PC-9 (cell line): ENCODE measurements at regions of chr5 and their contacts with region 1.

Region 1: DNA sequence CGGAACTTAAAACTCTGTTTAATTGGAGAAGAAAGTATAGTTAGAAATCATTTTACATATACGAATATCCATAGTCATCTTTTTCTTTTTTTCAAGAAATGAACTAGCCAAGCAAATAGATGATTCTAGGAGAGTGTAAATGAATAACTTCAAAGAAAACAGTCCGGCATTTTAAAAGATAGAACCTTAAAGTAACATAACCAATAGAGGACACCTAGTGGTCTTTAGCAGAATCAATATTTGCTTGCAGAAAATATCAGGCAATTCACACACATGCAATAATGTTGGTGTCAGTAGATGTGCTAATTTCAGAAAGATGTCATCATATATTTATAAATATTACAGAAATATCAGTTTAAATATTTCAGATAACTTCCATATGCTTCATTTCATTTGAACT is 57.1 kb downstream of the HCN1 start:
- DNase-seq: no peak
- H3K4me3 ChIP-seq: no peak overlapping the region
- H3K27ac ChIP-seq: no peak overlapping the region
- H3K4me1 ChIP-seq: no peaks in the 10 kb centered on the region
- H3K27me3 ChIP-seq: no peaks in the 10 kb centered on the region
- CTCF ChIP-seq: peak; percentile 58

Region 2: GRCh38 chr5:45038366-45038987 is 600.6 kb before region 1 on chr5:
- CTCF ChIA-PET with region 1: no interaction called
- POLR2A ChIA-PET with region 1: no interaction called
- intact Hi-C with region 1: loop called (anchors 10 kb)
- DNase-seq: peak in 1 of 2 experiments; percentile 12
- H3K4me3 ChIP-seq: no peak overlapping the region
- H3K27ac ChIP-seq: no peak overlapping the region
- H3K4me1 ChIP-seq: no peaks in the 10 kb centered on the region
- H3K27me3 ChIP-seq: no peaks in the 10 kb centered on the region
- CTCF ChIP-seq: peak; percentile 86